ENCODE measurements at regions of chr10 and their contacts with region 1.

Region 1: DNA sequence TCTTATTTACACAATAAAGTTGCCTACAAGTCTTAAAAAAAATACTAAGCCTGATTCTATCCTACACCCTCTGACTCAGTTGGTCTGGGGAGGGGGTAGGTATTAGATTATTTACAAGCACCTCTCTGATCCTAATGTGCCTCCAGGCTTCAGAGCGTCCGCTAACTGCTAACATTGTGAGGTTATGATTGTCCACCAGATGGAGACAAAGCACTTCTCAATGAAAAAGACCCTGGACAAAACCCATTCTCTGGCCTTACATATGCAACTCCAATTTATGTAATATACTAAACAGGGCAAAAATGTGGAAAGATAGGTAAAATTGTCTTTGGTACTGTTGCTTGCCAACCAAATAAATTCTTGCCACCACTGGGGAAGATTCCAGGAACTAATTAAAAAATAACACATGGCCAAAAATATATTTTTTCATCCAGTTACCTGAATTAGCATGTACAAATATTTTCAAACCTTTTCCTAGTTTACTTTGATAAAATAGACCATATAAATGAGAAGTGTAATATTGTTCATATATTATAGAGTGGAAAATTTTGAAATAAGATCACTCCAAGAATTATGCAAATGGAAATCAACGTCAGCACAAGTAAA is 92.4 kb downstream of the KIF20B start:
- DNase-seq: no peak
- H3K4me3 ChIP-seq: no peak overlapping the region
- H3K27ac ChIP-seq: no peak overlapping the region
- H3K4me1 ChIP-seq: no peaks in the 10 kb centered on the region
- H3K27me3 ChIP-seq: no peaks in the 10 kb centered on the region
- CTCF ChIP-seq: peak; percentile 76 to 83 (median 77)
- EP300 ChIP-seq: no peak
- POLR2A ChIP-seq: no peak

Region 2: GRCh38 chr10:90592638-90593302 is 799.0 kb after region 1 on chr10:
- intact Hi-C with region 1: loop called (anchors 5 kb)
- DNase-seq: peak; percentile 91
- H3K4me3 ChIP-seq: no peak overlapping the region
- H3K27ac ChIP-seq: no peak overlapping the region
- H3K4me1 ChIP-seq: no peaks in the 10 kb centered on the region
- H3K27me3 ChIP-seq: no peaks in the 10 kb centered on the region
- CTCF ChIP-seq: peak in 1 of 3 experiments; percentile 16
- EP300 ChIP-seq: no peak
- POLR2A ChIP-seq: no peak

Region 3: GRCh38 chr10:90787393-90788198 is 993.8 kb after region 1 on chr10:
- intact Hi-C with region 1: loop called (anchors 5 kb)
- DNase-seq: no peak
- H3K4me3 ChIP-seq: no peak overlapping the region
- H3K27ac ChIP-seq: no peak overlapping the region
- H3K4me1 ChIP-seq: no peaks in the 10 kb centered on the region
- H3K27me3 ChIP-seq: no peaks in the 10 kb centered on the region
- CTCF ChIP-seq: peak; percentile 36 to 69 (median 45)
- EP300 ChIP-seq: no peak
- POLR2A ChIP-seq: no peak

Region 4: GRCh38 chr10:90862908-90863514 is 1069.3 kb after region 1 on chr10:
- intact Hi-C with region 1: loop called (anchors 10 kb)
- DNase-seq: no peak
- H3K4me3 ChIP-seq: no peak overlapping the region
- H3K27ac ChIP-seq: no peak overlapping the region
- H3K4me1 ChIP-seq: peaks cover 0 to 6% (median 3%) of the 10 kb centered on the region in 4 donors
- H3K27me3 ChIP-seq: peaks cover 0 to 32% (median 0%) of the 10 kb centered on the region in 4 donors
- CTCF ChIP-seq: peak; percentile 42 to 56 (median 45)
- EP300 ChIP-seq: no peak
- POLR2A ChIP-seq: no peak